AG04449 (cell line): ENCODE measurements at regions of chr5 and their contacts with region 1.

Region 1: DNA sequence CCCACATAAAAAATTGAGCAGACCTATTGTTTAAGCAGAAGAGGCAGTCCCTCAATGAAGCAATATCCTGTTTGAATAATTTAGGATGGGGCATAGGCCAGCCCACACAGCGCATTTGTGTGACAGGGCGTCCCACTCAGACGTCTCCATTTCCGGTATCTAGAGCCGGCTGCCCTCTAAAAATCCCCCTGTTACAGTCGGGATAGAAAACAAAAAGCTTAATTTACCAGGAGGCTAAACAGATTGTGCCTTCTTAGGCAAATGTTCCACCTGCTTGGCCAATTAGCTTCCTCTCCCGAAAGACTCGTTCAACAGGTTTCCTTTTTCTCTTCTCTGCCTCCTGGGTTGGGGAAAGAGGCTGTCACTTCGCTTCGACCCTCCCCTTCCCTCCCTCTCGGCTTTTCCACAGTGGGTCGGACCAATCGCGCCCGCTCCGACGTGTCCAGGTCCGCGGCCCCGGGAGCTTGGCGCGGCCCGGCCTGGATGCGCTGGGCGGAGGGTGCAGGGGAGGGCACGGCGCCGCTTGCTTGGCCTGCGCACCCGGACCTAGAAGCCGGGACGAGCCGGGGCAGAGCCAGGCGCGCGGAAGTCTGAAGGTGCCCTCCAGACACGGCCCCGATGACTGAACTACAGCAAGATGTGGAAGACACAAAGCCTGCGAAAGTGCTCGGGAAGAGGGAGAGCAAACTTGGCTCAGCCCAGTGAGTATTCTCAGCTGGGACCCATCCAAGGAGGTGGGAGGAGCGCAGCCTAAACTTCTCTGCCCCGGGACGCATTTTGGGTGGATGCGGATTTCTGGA is at the start of gene GRAMD2B:
- DNase-seq: peak; percentile 46
- H3K4me3 ChIP-seq: peak within 1 kb of the TSS; percentile 75
- CTCF ChIP-seq: no peak

Region 2: DNA sequence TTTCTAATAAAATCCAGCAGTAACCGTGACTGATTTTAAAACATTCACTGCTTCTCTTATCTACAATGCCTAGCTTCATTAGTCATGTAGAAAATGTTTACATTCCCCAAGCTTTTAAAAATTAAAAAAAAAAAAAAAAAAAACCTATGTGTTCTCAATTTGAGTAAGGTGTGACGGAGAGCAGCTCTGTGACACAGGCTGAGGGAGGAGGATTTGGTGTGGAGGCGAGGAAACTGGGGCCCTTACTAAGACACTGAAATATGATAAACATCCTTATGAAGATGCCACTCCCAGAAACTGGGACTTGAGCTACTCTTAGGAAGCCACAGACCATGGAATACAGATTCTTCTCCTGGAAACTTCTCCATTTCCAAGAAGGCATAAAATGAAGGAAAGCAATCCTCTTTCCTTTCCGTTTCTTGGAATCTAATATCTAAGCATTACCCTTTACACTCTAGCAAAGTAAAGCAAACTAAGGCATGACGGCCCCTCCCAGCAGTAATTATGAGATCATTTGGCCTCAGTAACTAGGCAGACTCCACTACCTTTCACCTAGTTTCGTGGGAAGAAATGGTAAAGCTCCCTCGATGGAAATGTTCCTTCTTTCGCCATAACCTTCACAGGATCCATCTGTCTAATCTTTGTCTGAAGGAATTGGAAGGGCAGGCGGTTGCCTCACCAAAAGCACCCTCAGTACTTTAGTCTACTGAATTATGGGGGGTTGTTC is 23.5 kb after region 1 on chr5:
- CTCF ChIA-PET with region 1: interaction called, 4 read pairs
- POLR2A ChIA-PET with region 1: interaction called, 14 read pairs
- DNase-seq: peak; percentile 80
- H3K4me3 ChIP-seq: no peak overlapping the region
- CTCF ChIP-seq: no peak